Activated CD4-positive, alpha-beta T cell treated with anti-CD3 and anti-CD28 coated beads for 36 hours (primary cell): ENCODE measurements at regions of chr1 and their contacts with region 1.

Region 1: GRCh38 chr1:155323798-155324610 is 3.3 kb downstream of the RUSC1 start:
- DNase-seq: peak; percentile 95
- ATAC-seq: peak; percentile 81
- H3K4me3 Mint-ChIP-seq: peak overlapping the region; percentile 76
- H3K27ac Mint-ChIP-seq: peak overlapping the region; percentile 45
- H3K4me1 Mint-ChIP-seq: peaks cover 40% of the 10 kb centered on the region
- H3K27me3 Mint-ChIP-seq: no peaks in the 10 kb centered on the region

Region 2: DNA sequence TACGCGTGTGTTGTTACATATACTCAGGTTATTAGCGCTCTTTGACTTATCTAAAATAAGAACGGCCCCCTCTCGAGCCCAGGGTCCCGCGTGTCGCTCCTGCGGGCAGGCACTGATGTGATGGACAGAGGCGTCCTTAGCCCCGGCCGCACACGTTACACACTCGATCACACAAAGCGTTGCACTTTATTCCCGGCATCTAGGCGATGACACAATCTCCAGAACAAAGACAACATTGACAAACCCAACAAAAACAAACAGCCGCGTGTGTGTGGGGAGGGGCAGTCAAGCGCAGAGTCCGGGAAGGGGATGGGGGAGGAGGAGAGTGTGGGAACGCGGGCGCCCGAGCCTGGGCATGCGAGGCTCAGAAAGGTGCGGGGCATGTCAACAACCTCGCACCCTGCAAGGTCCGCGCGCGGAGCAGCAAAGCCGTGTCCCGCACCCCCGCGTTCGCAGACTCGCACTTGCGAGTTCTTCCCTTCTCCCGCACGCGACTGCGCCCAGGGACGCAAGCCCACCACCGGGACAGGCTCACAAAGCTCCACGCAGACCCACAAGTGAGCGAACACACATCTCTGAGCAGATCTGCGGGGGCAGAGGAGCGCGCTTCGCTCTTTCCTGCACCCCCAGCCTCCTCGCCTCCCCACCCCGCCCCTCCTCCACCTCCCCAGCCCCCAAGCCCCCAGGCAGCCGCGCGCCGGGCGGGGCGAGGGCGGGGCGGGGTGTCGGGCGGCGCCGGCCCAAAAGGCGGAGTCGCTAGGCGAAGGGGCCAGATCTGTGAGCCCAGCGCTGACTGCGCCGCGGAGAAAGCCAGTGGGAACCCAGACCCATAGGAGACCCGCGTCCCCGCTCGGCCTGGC is 196.7 kb before region 1 on chr1 and contains the start of gene EFNA1:
- CTCF ChIA-PET with region 1: no interaction called
- POLR2A ChIA-PET with region 1: no interaction called
- intact Hi-C with region 1: no loop called
- DNase-seq: peak; percentile 55
- ATAC-seq: peak; percentile 48
- H3K4me3 Mint-ChIP-seq: peak within 1 kb of the TSS; percentile 66
- H3K27ac Mint-ChIP-seq: peak within 1 kb of the TSS; percentile 55
- H3K4me1 Mint-ChIP-seq: peaks cover 32% of the 10 kb centered on the region
- H3K27me3 Mint-ChIP-seq: peaks cover 20% of the 10 kb centered on the region
- total RNA-seq, gene EFNA1: 0.82 to 1.1 TPM

Region 3: DNA sequence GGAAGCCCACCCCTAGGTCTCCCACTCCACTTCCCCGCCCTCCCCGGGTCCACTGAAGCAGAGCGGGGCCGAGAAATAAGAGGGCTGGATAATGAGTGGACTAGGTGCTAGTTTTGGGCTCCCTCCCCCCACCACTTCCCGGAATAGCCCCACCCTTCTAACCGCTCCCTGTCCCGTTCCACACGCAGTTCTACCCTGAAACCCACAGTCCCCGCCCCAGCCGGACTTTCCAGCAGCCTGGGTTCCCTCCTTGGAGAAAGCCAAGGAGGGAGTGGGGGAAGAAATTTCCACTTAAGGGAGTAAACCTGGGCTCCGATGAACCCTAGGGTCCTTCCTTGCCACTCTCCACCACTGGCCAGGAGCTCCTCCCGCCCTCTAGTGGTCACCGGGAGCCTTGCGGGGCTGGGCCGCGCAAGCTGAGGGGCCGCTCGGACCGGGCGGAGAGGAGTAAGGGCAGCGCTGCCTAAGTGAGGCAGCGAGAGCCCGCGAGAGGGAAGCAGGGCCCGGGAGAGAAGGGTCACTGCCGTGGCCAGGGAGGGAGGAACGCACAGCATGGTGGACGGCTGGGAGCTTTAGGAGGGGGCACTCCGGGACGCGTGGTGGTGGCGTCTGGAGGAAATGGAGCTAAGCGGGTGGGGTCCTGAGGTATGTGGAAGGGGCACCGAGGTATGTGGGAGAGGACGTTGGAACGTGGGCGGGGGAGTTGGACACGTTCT is 130.6 kb before region 1 on chr1:
- CTCF ChIA-PET with region 1: interaction called, 10 read pairs
- POLR2A ChIA-PET with region 1: no interaction called
- intact Hi-C with region 1: loop called (anchors 1 to 5 kb)
- DNase-seq: peak; percentile 89
- ATAC-seq: peak; percentile 62
- H3K4me3 Mint-ChIP-seq: peak overlapping the region; percentile 94
- H3K27ac Mint-ChIP-seq: peak overlapping the region; percentile 96
- H3K4me1 Mint-ChIP-seq: peaks cover 31% of the 10 kb centered on the region
- H3K27me3 Mint-ChIP-seq: no peaks in the 10 kb centered on the region

Region 4: GRCh38 chr1:155227261-155228095 is 96.5 kb before region 1 on chr1:
- CTCF ChIA-PET with region 1: no interaction called
- POLR2A ChIA-PET with region 1: no interaction called
- intact Hi-C with region 1: loop called in 1 of 2 experiments (anchors 1 kb)
- DNase-seq: peak; percentile 99
- ATAC-seq: peak; percentile 98
- H3K4me3 Mint-ChIP-seq: peak overlapping the region; percentile 96
- H3K27ac Mint-ChIP-seq: peak overlapping the region; percentile 97
- H3K4me1 Mint-ChIP-seq: peaks cover 27% of the 10 kb centered on the region
- H3K27me3 Mint-ChIP-seq: no peaks in the 10 kb centered on the region

Region 5: GRCh38 chr1:155261852-155262673 is 61.9 kb before region 1 on chr1 and contains the start of gene SCAMP3:
- CTCF ChIA-PET with region 1: interaction called, 8 read pairs
- POLR2A ChIA-PET with region 1: interaction called, 4 read pairs
- intact Hi-C with region 1: loop called in 1 of 2 experiments (anchors 1 kb)
- DNase-seq: peak; percentile 93
- ATAC-seq: peak; percentile 95
- H3K4me3 Mint-ChIP-seq: peak within 1 kb of the TSS; percentile 98
- H3K27ac Mint-ChIP-seq: peak within 1 kb of the TSS; percentile 91
- H3K4me1 Mint-ChIP-seq: peaks cover 27% of the 10 kb centered on the region
- H3K27me3 Mint-ChIP-seq: no peaks in the 10 kb centered on the region
- total RNA-seq, gene SCAMP3: 82.0 to 95.5 TPM

Region 6: DNA sequence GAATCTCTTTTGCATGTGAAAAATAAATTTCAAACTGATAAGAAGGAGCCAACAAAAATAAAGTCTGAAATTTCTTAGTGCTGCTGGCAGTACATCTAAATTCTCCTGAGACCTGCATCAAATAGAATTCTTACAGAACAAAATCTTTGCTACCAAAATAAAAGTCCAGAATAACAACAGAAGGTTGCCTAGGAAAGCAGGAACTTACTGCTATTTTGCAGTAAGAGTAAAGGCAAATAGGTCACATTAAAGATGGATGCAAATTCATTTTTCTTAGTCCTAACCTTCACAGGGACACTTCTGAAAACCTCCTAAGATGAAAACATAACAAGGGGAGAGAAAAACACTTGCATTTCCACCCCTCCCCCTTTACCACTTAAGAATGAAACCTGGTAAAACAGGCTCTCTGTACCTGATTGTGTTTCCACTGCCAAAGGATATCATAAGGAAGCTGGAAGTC is 55.7 kb after region 1 on chr1:
- CTCF ChIA-PET with region 1: no interaction called
- POLR2A ChIA-PET with region 1: no interaction called
- intact Hi-C with region 1: no loop called
- DNase-seq: no peak
- ATAC-seq: no peak
- H3K4me3 Mint-ChIP-seq: no peak overlapping the region
- H3K27ac Mint-ChIP-seq: no peak overlapping the region
- H3K4me1 Mint-ChIP-seq: peaks cover 8% of the 10 kb centered on the region
- H3K27me3 Mint-ChIP-seq: no peaks in the 10 kb centered on the region

Region 7: GRCh38 chr1:155562581-155563376 is 238.8 kb after region 1 on chr1 and contains the start of gene ASH1L:
- CTCF ChIA-PET with region 1: no interaction called
- POLR2A ChIA-PET with region 1: no interaction called
- intact Hi-C with region 1: loop called in 1 of 2 experiments (anchors 1 kb)
- DNase-seq: peak; percentile 96
- ATAC-seq: peak; percentile 83
- H3K4me3 Mint-ChIP-seq: peak within 1 kb of the TSS; percentile 90
- H3K27ac Mint-ChIP-seq: peak within 1 kb of the TSS; percentile 99
- H3K4me1 Mint-ChIP-seq: peaks cover 46% of the 10 kb centered on the region
- H3K27me3 Mint-ChIP-seq: no peaks in the 10 kb centered on the region
- total RNA-seq, gene ASH1L: 28.1 to 31.4 TPM

Region 8: GRCh38 chr1:155574077-155574476 is 250.1 kb after region 1 on chr1:
- CTCF ChIA-PET with region 1: no interaction called
- POLR2A ChIA-PET with region 1: no interaction called
- intact Hi-C with region 1: no loop called
- DNase-seq: no peak
- ATAC-seq: no peak
- H3K4me3 Mint-ChIP-seq: no peak overlapping the region
- H3K27ac Mint-ChIP-seq: no peak overlapping the region
- H3K4me1 Mint-ChIP-seq: peaks cover 16% of the 10 kb centered on the region
- H3K27me3 Mint-ChIP-seq: no peaks in the 10 kb centered on the region

Region 9: GRCh38 chr1:155609515-155610256 is 285.7 kb after region 1 on chr1 and contains the start of gene MSTO1:
- CTCF ChIA-PET with region 1: no interaction called
- POLR2A ChIA-PET with region 1: no interaction called
- intact Hi-C with region 1: loop called in 1 of 2 experiments (anchors 1 kb)
- DNase-seq: peak; percentile 100
- ATAC-seq: peak; percentile 97
- H3K4me3 Mint-ChIP-seq: peak within 1 kb of the TSS; percentile 95
- H3K27ac Mint-ChIP-seq: peak within 1 kb of the TSS; percentile 92
- H3K4me1 Mint-ChIP-seq: peaks cover 3% of the 10 kb centered on the region
- H3K27me3 Mint-ChIP-seq: no peaks in the 10 kb centered on the region
- total RNA-seq, gene MSTO1: 56.8 to 62.1 TPM

Region 10: GRCh38 chr1:155978325-155978972 is 654.4 kb after region 1 on chr1 and contains the start of gene ARHGEF2:
- CTCF ChIA-PET with region 1: interaction called, 3 read pairs
- POLR2A ChIA-PET with region 1: no interaction called
- intact Hi-C with region 1: loop called in 1 of 2 experiments (anchors 5 kb)
- DNase-seq: peak; percentile 88
- ATAC-seq: peak; percentile 57
- H3K4me3 Mint-ChIP-seq: peak within 1 kb of the TSS; percentile 100
- H3K27ac Mint-ChIP-seq: peak within 1 kb of the TSS; percentile 96
- H3K4me1 Mint-ChIP-seq: peaks cover 68% of the 10 kb centered on the region
- H3K27me3 Mint-ChIP-seq: no peaks in the 10 kb centered on the region
- total RNA-seq, gene ARHGEF2: 135 to 216 TPM